Activated T-helper 1 cell treated with anti-CD3 and anti-CD28 coated beads, Interleukin-12 subunit alpha, Interleukin-12 subunit beta, Interleukin-2, Interleukin-4 antibody, amounts not matched to agents 30 ng/mL and 10 ng/mL and 1 ng/mL, durations not matched to agents 14 hours and 24 hours and 36 hours (primary cell): ENCODE measurements at regions of chr6 and their contacts with region 1.

Region 1: GRCh38 chr6:28399350-28400121 is at the start of gene ZSCAN12:
- DNase-seq: peak; percentile 76
- H3K4me3 Mint-ChIP-seq: peak within 1 kb of the TSS; percentile 90
- H3K27ac Mint-ChIP-seq: peak within 1 kb of the TSS; percentile 84
- H3K4me1 Mint-ChIP-seq: peaks cover 48% of the 10 kb centered on the region
- H3K27me3 Mint-ChIP-seq: peaks cover 15% of the 10 kb centered on the region
- total RNA-seq, gene ZSCAN12: 5.6 and 5.7 TPM in 2 replicates

Region 2: GRCh38 chr6:27650620-27651370 is 748.7 kb before region 1 on chr6:
- intact Hi-C with region 1: no loop called
- DNase-seq: no peak
- H3K4me3 Mint-ChIP-seq: no peak overlapping the region
- H3K27ac Mint-ChIP-seq: peak overlapping the region; percentile 48
- H3K4me1 Mint-ChIP-seq: peaks cover 13% of the 10 kb centered on the region
- H3K27me3 Mint-ChIP-seq: peaks cover 27% of the 10 kb centered on the region

Region 3: GRCh38 chr6:28080631-28081485 is 318.7 kb before region 1 on chr6:
- intact Hi-C with region 1: loop called (anchors 1 kb)
- DNase-seq: peak; percentile 82
- H3K4me3 Mint-ChIP-seq: peak overlapping the region; percentile 96
- H3K27ac Mint-ChIP-seq: peak overlapping the region; percentile 96
- H3K4me1 Mint-ChIP-seq: peaks cover 21% of the 10 kb centered on the region
- H3K27me3 Mint-ChIP-seq: peaks cover 2% of the 10 kb centered on the region

Region 4: DNA sequence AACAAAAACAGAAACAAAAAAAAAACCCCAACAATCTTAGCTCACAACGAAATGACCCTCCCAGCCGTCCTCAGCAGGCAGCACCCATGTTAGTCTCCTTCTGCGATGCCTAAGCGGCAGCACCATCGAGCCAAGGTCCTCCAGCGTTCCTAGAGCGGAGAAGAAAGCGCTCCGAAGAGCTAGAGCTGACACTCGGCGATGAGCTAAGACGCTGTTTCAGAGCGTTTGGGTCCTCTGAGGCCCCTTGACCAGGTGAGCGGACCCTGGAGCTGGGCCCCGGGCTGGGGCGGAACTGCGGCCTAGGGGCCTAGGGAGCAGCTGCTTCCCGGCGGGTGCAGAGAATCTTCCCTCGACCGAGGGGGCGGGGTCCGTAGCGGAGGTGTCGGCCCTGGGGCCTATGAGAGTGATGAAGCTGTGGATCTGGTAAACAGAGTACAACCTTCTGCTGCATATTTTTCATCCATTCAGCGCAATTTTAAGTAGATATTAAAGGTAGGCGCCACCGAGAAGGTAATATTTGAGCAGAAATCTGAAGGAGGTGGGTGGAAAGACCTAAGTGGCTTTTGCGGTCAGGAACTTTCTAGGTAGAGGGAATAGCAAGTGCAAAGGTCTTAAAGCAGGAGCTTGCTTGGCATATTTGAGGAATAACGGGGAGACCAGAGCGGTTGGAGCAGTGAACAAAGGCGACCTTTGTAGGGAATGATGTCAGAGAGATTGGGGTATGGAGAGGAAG is 132.4 kb before region 1 on chr6 and contains the start of gene ZSCAN26:
- intact Hi-C with region 1: loop called (anchors 2 kb)
- DNase-seq: peak; percentile 78
- H3K4me3 Mint-ChIP-seq: no peak within 1 kb of the TSS
- H3K27ac Mint-ChIP-seq: no peak within 1 kb of the TSS
- H3K4me1 Mint-ChIP-seq: peaks cover 9% of the 10 kb centered on the region
- H3K27me3 Mint-ChIP-seq: peaks cover 2% of the 10 kb centered on the region
- total RNA-seq, gene ZSCAN26: 5.4 and 6.0 TPM in 2 replicates

Region 5: DNA sequence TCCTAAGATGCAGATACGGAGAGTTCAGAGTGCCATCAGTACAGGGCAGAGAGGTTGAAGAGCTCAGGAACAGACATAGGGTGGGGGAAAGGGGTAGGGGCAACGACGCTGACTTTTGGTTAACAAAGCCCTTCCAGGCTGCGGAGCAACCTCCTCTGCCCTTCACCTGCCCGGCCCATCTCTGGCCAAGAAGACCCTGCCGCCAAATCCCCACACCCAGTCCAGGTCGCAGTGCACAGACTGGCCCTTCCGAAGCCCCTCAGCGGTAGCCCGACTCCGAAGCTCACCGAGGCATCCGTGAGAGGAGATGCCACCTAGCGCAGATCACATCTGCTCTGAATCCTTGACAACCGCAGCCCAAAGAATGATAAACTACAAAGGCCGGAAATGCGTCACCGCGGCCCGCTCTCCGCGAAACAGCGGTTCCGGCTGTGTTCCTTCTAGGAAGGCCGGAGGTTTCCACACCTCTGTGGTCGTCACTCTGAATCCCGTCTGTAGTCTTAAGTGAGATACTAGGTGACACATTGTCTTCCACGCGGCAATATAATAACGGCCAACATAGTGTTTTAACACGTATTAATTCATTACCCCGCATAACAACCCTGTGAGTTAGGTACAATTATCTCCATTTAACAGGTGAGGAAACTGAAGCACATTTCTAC is 43.7 kb after region 1 on chr6 and contains the start of gene ZSCAN23:
- intact Hi-C with region 1: loop called (anchors 1 kb)
- DNase-seq: peak; percentile 79
- H3K4me3 Mint-ChIP-seq: peak within 1 kb of the TSS; percentile 98
- H3K27ac Mint-ChIP-seq: peak within 1 kb of the TSS; percentile 89
- H3K4me1 Mint-ChIP-seq: peaks cover 41% of the 10 kb centered on the region
- H3K27me3 Mint-ChIP-seq: peaks cover 16% of the 10 kb centered on the region
- total RNA-seq, gene ZSCAN23: 1.1 and 2.2 TPM in 2 replicates

Region 6: DNA sequence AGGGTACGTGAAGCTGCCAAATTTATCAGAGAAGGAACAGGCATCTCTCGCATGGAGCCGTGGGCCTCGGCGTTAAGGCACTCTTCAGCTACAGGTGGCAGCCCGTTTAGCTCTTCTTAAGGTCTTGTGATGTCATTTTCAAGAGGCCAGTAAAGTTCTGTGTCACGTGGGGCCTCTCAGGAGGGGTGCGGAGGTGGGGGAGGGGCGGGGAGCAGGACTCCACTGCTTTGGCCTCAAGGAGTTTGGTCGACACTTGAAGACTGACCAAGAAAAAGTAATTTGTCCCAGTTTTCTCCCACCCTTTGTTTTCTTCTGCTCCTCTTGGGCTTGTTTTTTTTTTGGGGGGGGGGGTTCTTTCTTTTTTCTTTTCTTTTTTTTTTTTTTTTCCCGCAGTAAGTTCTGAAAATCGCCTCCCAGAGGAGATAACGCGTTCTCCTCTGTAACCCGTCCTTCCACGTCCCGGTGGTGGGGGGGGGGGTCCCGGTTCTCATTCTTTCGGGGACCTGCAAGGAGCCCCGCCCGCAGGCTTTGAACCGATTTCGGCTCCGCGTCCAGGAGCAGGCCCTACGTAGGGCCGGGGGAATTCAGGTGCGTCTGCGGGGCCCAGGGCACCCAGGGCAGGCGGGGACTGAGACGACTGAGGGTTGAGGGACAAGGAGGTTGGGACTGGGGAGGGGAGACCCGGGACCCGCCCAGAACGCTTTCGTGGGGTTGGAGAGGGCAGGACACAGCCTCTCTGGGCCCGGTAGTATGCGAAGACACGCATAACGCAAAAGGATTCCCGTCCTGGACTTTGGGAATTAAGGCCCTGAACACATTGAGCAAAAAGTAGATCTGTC is 90.0 kb after region 1 on chr6:
- intact Hi-C with region 1: loop called (anchors 5 kb)
- DNase-seq: peak; percentile 24
- H3K4me3 Mint-ChIP-seq: peak overlapping the region; percentile 78
- H3K27ac Mint-ChIP-seq: peak overlapping the region; percentile 77
- H3K4me1 Mint-ChIP-seq: peaks cover 27% of the 10 kb centered on the region
- H3K27me3 Mint-ChIP-seq: peaks cover 48% of the 10 kb centered on the region

Region 7: GRCh38 chr6:28586962-28587745 is 187.6 kb after region 1 on chr6:
- intact Hi-C with region 1: loop called (anchors 2 kb)
- DNase-seq: peak; percentile 49
- H3K4me3 Mint-ChIP-seq: peak overlapping the region; percentile 83
- H3K27ac Mint-ChIP-seq: no peak overlapping the region
- H3K4me1 Mint-ChIP-seq: peaks cover 43% of the 10 kb centered on the region
- H3K27me3 Mint-ChIP-seq: peaks cover 53% of the 10 kb centered on the region